ENCODE measurements at regions of chr7 and their contacts with region 1.

Region 1: DNA sequence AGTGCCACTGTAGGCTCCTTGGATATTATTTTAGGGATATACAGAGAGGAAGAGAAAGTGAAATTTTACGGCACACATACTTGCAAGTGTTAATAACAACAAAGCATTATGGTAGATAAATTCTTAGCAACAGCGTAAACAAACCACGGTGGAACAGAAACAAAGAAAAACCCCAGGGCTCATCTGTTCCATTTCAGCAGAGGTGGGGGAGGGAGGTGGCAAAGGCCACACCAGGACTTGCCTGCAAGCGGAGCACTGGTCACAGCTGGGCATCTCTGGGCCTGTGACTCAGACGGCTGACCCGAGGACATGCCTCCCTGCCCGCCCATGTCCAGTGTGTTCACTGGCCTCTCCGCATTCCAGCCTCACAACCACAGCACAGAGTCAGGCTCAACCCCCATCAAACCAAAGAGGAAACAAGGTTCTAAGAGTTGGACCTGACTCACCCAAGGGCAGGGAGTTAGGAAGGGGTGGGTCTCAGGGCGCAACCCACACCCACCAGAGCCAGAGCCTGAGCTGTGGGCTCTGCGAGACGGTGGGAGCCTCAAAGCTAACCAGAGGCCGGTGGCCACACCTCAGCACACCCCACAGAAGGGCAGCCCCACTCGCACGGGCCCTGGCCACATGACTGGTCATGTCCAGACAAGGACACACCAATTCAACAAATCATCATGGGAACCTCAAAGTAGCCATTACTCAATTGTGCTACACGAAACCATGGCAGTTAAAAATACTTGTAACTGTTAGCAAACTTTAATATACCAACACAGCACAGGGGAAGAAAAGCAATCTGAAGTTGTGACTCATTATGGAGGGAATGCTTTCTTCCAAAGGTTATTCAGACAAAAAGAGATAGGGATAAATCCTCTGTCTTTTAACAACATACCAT is 10.7 kb downstream of the ESYT2 start:
- DNase-seq: peak; percentile 92
- ATAC-seq: peak; percentile 83
- H3K4me3 ChIP-seq: peak overlapping the region; percentile 67
- H3K27ac ChIP-seq: peak overlapping the region; percentile 99
- H3K4me1 ChIP-seq: peaks cover 59% of the 10 kb centered on the region
- H3K27me3 ChIP-seq: no peaks in the 10 kb centered on the region
- CTCF ChIP-seq: no peak

Region 2: DNA sequence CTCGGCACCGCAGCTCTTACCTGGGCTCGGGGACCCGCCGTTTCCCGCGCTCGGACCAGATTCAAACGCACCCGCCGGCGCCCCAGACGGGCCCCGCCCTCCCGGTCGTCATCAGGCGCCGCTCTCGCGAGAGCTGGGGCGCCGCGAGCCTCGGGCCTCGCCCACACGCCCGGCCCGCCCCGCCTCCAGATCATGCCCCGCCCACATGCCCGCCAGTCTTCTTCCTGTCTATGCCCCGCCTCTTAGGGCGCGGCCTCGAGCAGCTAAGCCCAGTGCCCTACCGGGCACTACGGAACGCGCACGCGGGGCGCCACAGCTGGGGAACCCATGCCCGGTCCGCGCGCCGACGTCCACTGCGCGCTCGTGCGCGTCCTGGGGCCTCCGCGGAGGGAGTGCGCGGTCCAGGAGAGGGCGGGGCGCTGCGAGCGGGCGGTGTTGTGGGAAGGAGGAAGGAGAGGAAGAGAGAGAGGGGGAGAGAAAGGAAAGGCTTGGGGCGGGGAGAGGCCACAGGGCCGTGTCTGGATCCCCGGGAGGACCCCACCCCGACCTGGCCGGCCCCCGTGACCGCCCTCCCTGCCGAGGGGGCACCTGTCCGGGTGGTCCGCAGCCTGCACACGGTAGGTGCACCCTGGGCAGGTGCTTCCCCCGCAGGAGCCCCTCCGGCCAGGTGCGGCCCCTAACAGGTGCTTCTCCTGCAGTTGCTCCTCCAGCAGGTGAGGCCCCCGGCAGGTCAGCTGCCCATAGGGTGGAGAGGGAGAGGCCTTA is 113.7 kb before region 1 on chr7 and contains the start of gene NCAPG2:
- CTCF ChIA-PET with region 1: no interaction called
- POLR2A ChIA-PET with region 1: no interaction called
- intact Hi-C with region 1: loop called (anchors 5 kb)
- DNase-seq: peak; percentile 98
- ATAC-seq: peak; percentile 98
- H3K4me3 ChIP-seq: peak within 1 kb of the TSS; percentile 99
- H3K27ac ChIP-seq: peak within 1 kb of the TSS; percentile 58
- H3K4me1 ChIP-seq: peaks cover 18% of the 10 kb centered on the region
- H3K27me3 ChIP-seq: no peaks in the 10 kb centered on the region
- CTCF ChIP-seq: no peak
- total RNA-seq, gene NCAPG2: 49.2 and 50.2 TPM in 2 replicates

Region 3: DNA sequence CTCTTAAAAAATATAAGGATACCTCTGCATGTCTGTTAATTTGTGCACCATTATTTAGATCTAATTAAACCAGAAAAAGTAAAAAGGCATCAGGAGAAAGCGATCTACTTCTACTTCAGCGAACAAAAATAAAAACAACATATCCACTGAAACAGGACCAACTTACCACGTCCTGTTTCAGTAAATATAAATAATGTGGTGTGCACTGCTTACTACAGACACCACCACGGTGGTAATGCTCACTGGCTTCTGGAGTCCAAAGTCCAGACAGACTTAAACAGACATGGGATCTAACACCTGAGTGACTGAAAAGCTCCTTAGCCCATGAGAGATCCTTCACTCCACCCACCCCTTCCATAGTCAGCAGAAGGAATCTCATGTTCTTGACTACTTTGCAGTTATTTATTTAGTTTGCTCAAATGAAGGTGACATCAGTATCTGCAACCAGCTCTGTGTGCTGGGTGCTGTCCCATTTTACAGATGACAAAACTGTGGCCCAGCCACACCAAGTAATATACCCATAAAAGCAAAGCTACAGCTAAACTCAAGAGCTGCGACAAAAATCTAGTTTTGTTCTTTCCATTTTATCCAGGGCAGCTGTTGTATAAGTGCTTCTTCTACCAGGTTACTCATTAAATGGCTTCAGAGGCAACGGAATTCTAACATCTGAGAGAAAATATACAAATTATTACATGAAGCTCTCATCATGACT is 51.8 kb before region 1 on chr7:
- CTCF ChIA-PET with region 1: no interaction called
- POLR2A ChIA-PET with region 1: no interaction called
- intact Hi-C with region 1: no loop called
- DNase-seq: no peak
- ATAC-seq: no peak
- H3K4me3 ChIP-seq: no peak overlapping the region
- H3K27ac ChIP-seq: no peak overlapping the region
- H3K4me1 ChIP-seq: no peaks in the 10 kb centered on the region
- H3K27me3 ChIP-seq: no peaks in the 10 kb centered on the region
- CTCF ChIP-seq: no peak

Region 4: DNA sequence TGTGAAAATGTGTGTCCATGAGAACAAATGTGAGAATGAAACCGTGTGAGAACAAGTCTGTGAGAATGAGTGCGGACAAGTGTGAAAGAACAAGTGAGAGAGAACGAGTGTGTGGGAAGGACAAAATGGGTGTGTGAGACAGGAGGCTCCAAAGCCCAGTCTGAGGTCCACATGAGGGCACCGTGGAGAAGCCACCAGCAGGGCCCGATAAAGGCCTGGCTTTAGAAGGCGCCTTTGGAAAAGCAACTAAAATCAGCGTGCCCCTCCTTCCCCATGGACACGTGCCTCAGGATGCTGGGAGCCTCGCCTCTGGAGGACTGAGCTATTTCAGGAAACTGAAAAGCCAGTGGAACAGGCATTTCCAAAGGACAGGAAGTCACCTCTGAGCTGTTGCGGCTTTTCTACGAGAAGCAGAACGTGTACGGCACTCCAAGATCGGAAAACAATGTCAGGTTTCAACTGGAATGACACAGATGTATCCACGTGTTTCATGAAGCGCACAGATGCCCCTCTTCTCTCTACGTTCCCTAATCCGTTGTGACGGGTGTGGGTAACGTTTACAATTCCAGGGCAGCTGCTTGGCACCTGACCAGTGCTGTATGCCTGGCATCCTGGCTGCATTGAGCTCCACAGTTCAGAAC is 35.7 kb before region 1 on chr7:
- CTCF ChIA-PET with region 1: no interaction called
- POLR2A ChIA-PET with region 1: no interaction called
- intact Hi-C with region 1: loop called (anchors 2 kb)
- DNase-seq: peak; percentile 45
- ATAC-seq: peak; percentile 74
- H3K4me3 ChIP-seq: no peak overlapping the region
- H3K27ac ChIP-seq: no peak overlapping the region
- H3K4me1 ChIP-seq: no peaks in the 10 kb centered on the region; the same call in none of the 2 replicates
- H3K27me3 ChIP-seq: no peaks in the 10 kb centered on the region
- CTCF ChIP-seq: peak; percentile 55

Region 5: GRCh38 chr7:158829342-158830210 is 11.0 kb after region 1 on chr7 and contains the start of gene ESYT2:
- CTCF ChIA-PET with region 1: no interaction called
- POLR2A ChIA-PET with region 1: no interaction called
- intact Hi-C with region 1: loop called (anchors 1 kb)
- DNase-seq: peak; percentile 94
- ATAC-seq: peak; percentile 82
- H3K4me3 ChIP-seq: peak within 1 kb of the TSS; percentile 99
- H3K27ac ChIP-seq: peak within 1 kb of the TSS; percentile 81
- H3K4me1 ChIP-seq: peaks cover 17% of the 10 kb centered on the region
- H3K27me3 ChIP-seq: no peaks in the 10 kb centered on the region
- CTCF ChIP-seq: peak; percentile 32; the same call in 1 of the 2 replicates
- total RNA-seq, gene ESYT2: 76.1 and 78.0 TPM in 2 replicates

Region 6: GRCh38 chr7:158863611-158864506 is 45.3 kb after region 1 on chr7:
- CTCF ChIA-PET with region 1: interaction called, 9 read pairs
- POLR2A ChIA-PET with region 1: interaction called, 7 read pairs
- intact Hi-C with region 1: loop called (anchors 1 kb)
- DNase-seq: peak; percentile 85
- ATAC-seq: peak; percentile 81
- H3K4me3 ChIP-seq: peak overlapping the region; percentile 55
- H3K27ac ChIP-seq: peak overlapping the region; percentile 85
- H3K4me1 ChIP-seq: peaks cover 34% of the 10 kb centered on the region
- H3K27me3 ChIP-seq: no peaks in the 10 kb centered on the region
- CTCF ChIP-seq: no peak

Measured in PC-3 (cell line).